ENCODE measurements at regions of chr14 and their contacts with region 1.

Region 1: DNA sequence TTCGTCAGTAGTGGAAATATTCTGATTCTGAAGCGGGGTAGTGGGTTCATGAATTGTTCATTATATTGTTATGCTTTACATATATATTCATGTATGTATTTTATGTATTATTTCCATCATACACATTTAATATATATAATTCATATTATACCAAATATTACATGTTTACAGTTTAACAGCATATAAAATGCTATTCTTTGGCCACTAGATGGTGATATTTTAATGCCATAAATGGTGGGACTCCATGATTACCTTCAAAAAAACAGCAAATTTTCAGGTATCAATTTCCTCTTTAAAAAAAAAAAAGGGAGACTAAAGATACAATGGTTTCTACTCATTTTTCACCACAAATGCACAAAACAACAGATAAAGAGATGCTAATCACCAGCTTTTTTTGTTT is 41.0 kb downstream of the BDKRB1 start:
- DNase-seq: peak in 2 of 5 donors; percentile 15 to 25
- H3K4me3 ChIP-seq: no peak overlapping the region
- H3K4me3 Mint-ChIP-seq: no peak overlapping the region
- H3K27ac ChIP-seq: no peak overlapping the region
- H3K27ac Mint-ChIP-seq: no peak overlapping the region
- H3K4me1 ChIP-seq: no peaks in the 10 kb centered on the region
- H3K4me1 Mint-ChIP-seq: no peaks in the 10 kb centered on the region
- H3K27me3 ChIP-seq: no peaks in the 10 kb centered on the region
- H3K27me3 Mint-ChIP-seq: peaks cover 0 to 2% of the 10 kb centered on the region in 2 donors

Region 2: GRCh38 chr14:96424109-96424989 is 127.3 kb after region 1 on chr14:
- CTCF ChIA-PET with region 1: interaction called, 26 read pairs
- POLR2A ChIA-PET with region 1: no interaction called
- DNase-seq: peak in 2 of 5 donors; percentile 33 to 54
- H3K4me3 ChIP-seq: peak overlapping the region; percentile 35
- H3K4me3 Mint-ChIP-seq: peak overlapping the region; percentile 74 to 87 (median 80)
- H3K27ac ChIP-seq: no peak overlapping the region
- H3K27ac Mint-ChIP-seq: no peak overlapping the region
- H3K4me1 ChIP-seq: no peaks in the 10 kb centered on the region
- H3K4me1 Mint-ChIP-seq: peaks cover 4 to 10% (median 4%) of the 10 kb centered on the region in 3 donors
- H3K27me3 ChIP-seq: no peaks in the 10 kb centered on the region
- H3K27me3 Mint-ChIP-seq: peaks cover 2 to 8% of the 10 kb centered on the region in 2 donors

Measured in CD8-positive, alpha-beta memory T cell (primary cell).